Left lung (tissue), 14 donors: ENCODE measurements at regions of chr10 and their contacts with region 1.

Region 1: GRCh38 chr10:80444646-80445319 is 9.3 kb upstream of the TSPAN14 start:
- DNase-seq: peak; percentile 65 to 87 (median 77)
- ATAC-seq: peak; percentile 92
- H3K4me3 ChIP-seq: no peak overlapping the region
- H3K27ac ChIP-seq: peak overlapping the region in 1 of 2 donors; percentile 18
- H3K4me1 ChIP-seq: peaks cover 6 to 28% of the 10 kb centered on the region in 2 donors
- H3K27me3 ChIP-seq: no peaks in the 10 kb centered on the region
- CTCF ChIP-seq: peak; percentile 32 to 73

Region 2: GRCh38 chr10:80504158-80504811 is 59.5 kb after region 1 on chr10:
- intact Hi-C with region 1: loop called in 1 of 2 experiments (anchors 2 kb)
- DNase-seq: peak in 1 of 4 donors; percentile 42
- ATAC-seq: peak; percentile 18
- H3K4me3 ChIP-seq: no peak overlapping the region
- H3K27ac ChIP-seq: peak overlapping the region; percentile 72 to 90
- H3K4me1 ChIP-seq: peaks cover 43 to 99% of the 10 kb centered on the region in 2 donors
- H3K27me3 ChIP-seq: no peaks in the 10 kb centered on the region
- CTCF ChIP-seq: no peak

Region 3: DNA sequence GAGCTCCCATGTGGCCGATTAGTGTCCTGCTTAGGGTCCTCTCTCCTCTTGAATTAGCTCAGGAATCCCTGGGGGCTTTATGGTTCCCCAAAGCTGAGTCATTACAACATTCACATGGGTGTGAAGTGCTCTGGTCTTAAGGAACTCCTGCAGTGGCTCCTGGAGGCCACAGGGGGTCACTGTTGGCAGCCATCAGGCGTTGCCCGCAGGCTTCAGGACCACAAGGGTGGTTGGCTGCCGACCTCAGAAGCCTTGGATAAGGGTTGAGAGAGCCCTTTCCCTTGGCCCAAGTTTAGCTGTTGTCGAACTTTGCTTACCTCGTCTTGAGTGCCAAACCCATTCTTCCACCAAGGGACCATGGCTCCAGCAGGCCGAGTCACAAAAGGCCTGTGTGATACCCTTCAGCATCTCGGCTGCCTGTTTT is 154.7 kb after region 1 on chr10:
- intact Hi-C with region 1: loop called in 1 of 2 experiments (anchors 10 kb)
- DNase-seq: peak in 3 of 4 donors; percentile 36 to 89 (median 57)
- ATAC-seq: peak; percentile 87
- H3K4me3 ChIP-seq: no peak overlapping the region
- H3K27ac ChIP-seq: peak overlapping the region in 1 of 2 donors; percentile 76
- H3K4me1 ChIP-seq: peaks cover 0 to 29% of the 10 kb centered on the region in 2 donors
- H3K27me3 ChIP-seq: no peaks in the 10 kb centered on the region
- CTCF ChIP-seq: peak; percentile 32 to 81